Activated T-helper 1 cell treated with anti-CD3 and anti-CD28 coated beads, Interleukin-12 subunit alpha, Interleukin-12 subunit beta, Interleukin-2, Interleukin-4 antibody, amounts not matched to agents 30 ng/mL and 10 ng/mL and 1 ng/mL, durations not matched to agents 14 hours and 24 hours and 36 hours (primary cell): ENCODE measurements at regions of chr6 and their contacts with region 1.

Region 1: GRCh38 chr6:1554476-1555310 is 55.0 kb upstream of the FOXC1 start:
- DNase-seq: peak; percentile 62
- H3K4me3 Mint-ChIP-seq: peak overlapping the region; percentile 87
- H3K27ac Mint-ChIP-seq: peak overlapping the region; percentile 76
- H3K4me1 Mint-ChIP-seq: peaks cover 27% of the 10 kb centered on the region
- H3K27me3 Mint-ChIP-seq: peaks cover 41% of the 10 kb centered on the region

Region 2: GRCh38 chr6:1524040-1524480 is 30.6 kb before region 1 on chr6:
- intact Hi-C with region 1: loop called (anchors 1 kb)
- DNase-seq: peak; percentile 70
- H3K4me3 Mint-ChIP-seq: no peak overlapping the region
- H3K27ac Mint-ChIP-seq: peak overlapping the region; percentile 41
- H3K4me1 Mint-ChIP-seq: peaks cover 44% of the 10 kb centered on the region
- H3K27me3 Mint-ChIP-seq: peaks cover 6% of the 10 kb centered on the region

Region 3: DNA sequence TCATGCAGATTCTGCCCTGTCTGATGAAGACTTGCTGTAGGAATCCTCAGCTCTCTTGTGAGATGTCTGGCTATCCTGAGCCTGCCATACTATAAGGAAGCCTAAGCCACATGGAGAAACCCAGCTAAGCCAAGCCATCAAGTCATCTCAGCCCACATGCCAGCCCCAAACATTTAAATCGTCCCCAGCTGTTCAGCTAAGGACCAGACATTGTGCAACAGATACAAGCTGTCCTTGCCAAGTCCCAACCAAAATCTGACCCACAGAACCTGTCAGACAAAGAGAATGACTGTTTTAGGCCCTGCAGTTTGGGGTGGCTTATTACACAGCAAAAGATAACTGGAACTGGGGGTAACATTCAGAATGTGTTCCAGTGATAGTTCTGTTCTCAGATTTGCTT is 18.2 kb after region 1 on chr6:
- intact Hi-C with region 1: no loop called
- DNase-seq: no peak
- H3K4me3 Mint-ChIP-seq: no peak overlapping the region
- H3K27ac Mint-ChIP-seq: no peak overlapping the region
- H3K4me1 Mint-ChIP-seq: no peaks in the 10 kb centered on the region
- H3K27me3 Mint-ChIP-seq: peaks cover 7% of the 10 kb centered on the region

Region 4: GRCh38 chr6:1636971-1637871 is 82.5 kb after region 1 on chr6:
- intact Hi-C with region 1: no loop called
- DNase-seq: no peak
- H3K4me3 Mint-ChIP-seq: no peak overlapping the region
- H3K27ac Mint-ChIP-seq: no peak overlapping the region
- H3K4me1 Mint-ChIP-seq: no peaks in the 10 kb centered on the region
- H3K27me3 Mint-ChIP-seq: peaks cover 2% of the 10 kb centered on the region